ENCODE measurements at regions of chr15 and their contacts with region 1.

Region 1: GRCh38 chr15:31236184-31237042 is 90.2 kb upstream of the KLF13 start:
- DNase-seq: peak in 1 of 2 donors; percentile 93
- H3K4me3 ChIP-seq: peak overlapping the region in 1 of 2 donors; percentile 39
- H3K27ac ChIP-seq: peak overlapping the region; percentile 71
- H3K4me1 ChIP-seq: peaks cover 18% of the 10 kb centered on the region
- H3K27me3 ChIP-seq: no peaks in the 10 kb centered on the region
- CTCF ChIP-seq: no peak
- POLR2A ChIP-seq: no peak

Region 2: DNA sequence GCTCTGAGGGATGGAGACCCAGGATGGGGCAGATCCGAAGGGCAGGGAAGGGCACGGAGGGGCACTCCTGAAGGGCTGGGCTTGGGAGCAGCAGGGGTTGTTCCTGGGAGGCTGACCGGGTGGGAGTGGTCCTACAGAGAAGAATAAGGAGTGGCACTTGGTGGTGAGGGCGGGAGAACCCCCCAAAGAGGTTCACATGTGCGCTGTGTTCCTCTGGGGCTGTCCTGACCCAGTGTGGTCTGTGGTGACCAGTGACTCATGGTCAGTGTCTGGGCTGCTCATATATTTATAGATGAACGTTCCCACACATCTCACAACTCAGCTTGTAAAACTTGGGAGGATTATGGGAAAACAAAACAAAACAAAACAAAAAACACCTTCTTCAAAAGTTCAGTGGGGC is 144.9 kb before region 1 on chr15:
- intact Hi-C with region 1: no loop called
- DNase-seq: no peak
- H3K4me3 ChIP-seq: no peak overlapping the region
- H3K27ac ChIP-seq: no peak overlapping the region
- H3K4me1 ChIP-seq: peaks cover 14% of the 10 kb centered on the region
- H3K27me3 ChIP-seq: no peaks in the 10 kb centered on the region
- CTCF ChIP-seq: no peak
- POLR2A ChIP-seq: no peak

Region 3: GRCh38 chr15:31179693-31180092 is 56.7 kb before region 1 on chr15:
- intact Hi-C with region 1: no loop called
- DNase-seq: no peak
- H3K4me3 ChIP-seq: no peak overlapping the region
- H3K27ac ChIP-seq: no peak overlapping the region
- H3K4me1 ChIP-seq: no peaks in the 10 kb centered on the region
- H3K27me3 ChIP-seq: no peaks in the 10 kb centered on the region
- CTCF ChIP-seq: no peak
- POLR2A ChIP-seq: no peak

Region 4: GRCh38 chr15:31440754-31441311 is 204.4 kb after region 1 on chr15:
- intact Hi-C with region 1: loop called (anchors 5 kb)
- DNase-seq: no peak
- H3K4me3 ChIP-seq: peak overlapping the region; percentile 48 to 58
- H3K27ac ChIP-seq: peak overlapping the region; percentile 94
- H3K4me1 ChIP-seq: peaks cover 55% of the 10 kb centered on the region
- H3K27me3 ChIP-seq: no peaks in the 10 kb centered on the region
- CTCF ChIP-seq: no peak
- POLR2A ChIP-seq: no peak

Measured in vagina (tissue), 2 donors.